CD4-positive, alpha-beta T cell (primary cell): ENCODE measurements at regions of chrX and their contacts with region 1.

Region 1: DNA sequence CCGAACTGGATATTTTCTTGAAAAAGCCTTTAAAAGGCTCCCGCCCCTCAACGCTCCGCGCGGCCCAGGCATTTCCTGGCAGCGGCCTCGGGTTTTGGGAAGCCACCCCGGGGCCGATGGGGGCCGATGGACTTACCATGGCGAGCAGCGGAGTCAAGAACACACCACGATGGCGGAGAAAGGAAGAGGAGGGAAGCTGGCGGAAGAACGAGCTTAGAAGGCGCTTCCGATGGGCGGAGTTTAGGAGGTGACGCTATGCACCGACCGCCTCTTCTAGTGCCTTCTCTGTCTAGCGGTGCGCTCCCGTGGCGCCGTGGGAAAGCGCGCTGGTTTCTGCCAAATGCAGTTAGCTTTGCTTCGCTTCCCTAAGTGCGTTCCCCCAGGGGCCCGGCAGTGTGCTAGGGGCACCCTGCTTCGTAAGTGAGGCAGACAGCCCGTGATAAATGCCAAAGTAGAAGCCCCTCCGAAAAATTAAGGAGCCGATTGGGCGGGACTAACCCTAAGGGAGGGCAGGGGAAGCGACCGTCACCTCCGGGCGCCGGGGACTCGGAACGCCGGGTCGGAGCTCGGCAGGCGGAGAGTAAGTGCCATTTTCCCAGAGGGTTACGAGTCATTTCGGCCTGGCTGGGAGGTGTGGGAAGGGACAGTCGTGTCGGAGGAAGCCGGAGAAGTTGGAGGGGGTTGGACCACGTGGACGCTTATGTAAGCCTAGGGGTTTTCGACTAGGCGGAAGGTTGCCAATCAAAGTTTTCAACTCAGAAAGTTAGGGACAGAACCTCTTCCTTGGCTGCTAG is at the start of gene RPL39:
- DNase-seq: peak; percentile 52 to 93 (median 74)
- ATAC-seq: peak; percentile 93
- H3K4me3 ChIP-seq: peak within 1 kb of the TSS; percentile 98
- H3K4me3 Mint-ChIP-seq: peak within 1 kb of the TSS; percentile 99
- H3K27ac ChIP-seq: peak within 1 kb of the TSS; percentile 91 to 97
- H3K27ac Mint-ChIP-seq: peak within 1 kb of the TSS; percentile 98
- H3K4me1 ChIP-seq: peaks cover 35% of the 10 kb centered on the region
- H3K4me1 Mint-ChIP-seq: peaks cover 32% of the 10 kb centered on the region
- H3K27me3 ChIP-seq: no peaks in the 10 kb centered on the region
- H3K27me3 Mint-ChIP-seq: no peaks in the 10 kb centered on the region
- CTCF ChIP-seq: no peak
- total RNA-seq, gene RPL39: 3,712 to 3,978 TPM

Region 2: DNA sequence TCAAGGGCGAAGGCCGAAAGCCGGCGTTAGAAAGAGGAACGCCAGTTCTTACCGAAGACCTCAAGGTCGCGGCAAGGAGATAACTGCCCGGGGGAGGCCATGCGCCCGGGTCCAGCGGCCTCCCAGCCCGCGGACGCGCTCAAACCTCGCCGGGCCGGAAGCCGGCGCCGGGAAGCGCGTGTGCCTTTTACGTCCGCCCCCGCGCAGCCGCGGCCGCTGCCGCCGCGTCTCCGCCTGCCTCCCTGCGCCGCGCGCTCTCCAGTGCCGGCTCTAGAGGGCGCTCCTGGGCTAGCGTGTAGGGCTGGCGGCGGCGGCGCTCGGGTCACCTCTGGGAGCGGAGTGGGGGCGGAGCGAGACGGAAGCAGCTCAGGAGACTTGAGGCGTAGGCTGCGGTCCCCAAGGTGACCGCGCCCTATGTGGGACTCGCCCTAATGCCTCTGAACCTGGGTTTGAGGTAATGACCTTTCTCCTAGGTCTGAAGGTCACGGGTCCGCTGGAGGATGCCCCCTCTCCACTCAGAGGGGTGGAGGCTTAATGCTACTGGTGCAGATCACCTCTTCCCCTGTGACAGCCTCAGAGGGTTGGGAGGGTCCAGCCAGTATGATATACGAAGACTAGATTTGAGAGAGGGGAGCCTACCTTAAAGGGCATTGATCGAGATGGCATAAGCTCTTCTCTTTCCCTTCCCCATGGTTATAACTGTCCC is 322.6 kb before region 1 on chrX:
- CTCF ChIA-PET with region 1: no interaction called
- POLR2A ChIA-PET with region 1: interaction called, 16 read pairs
- intact Hi-C with region 1: loop called in 1 of 2 experiments (anchors 5 kb)
- DNase-seq: peak; percentile 76 to 93 (median 84)
- ATAC-seq: peak; percentile 77
- H3K4me3 ChIP-seq: peak overlapping the region; percentile 92
- H3K4me3 Mint-ChIP-seq: peak overlapping the region; percentile 93
- H3K27ac ChIP-seq: peak overlapping the region; percentile 84 to 97
- H3K27ac Mint-ChIP-seq: peak overlapping the region; percentile 89
- H3K4me1 ChIP-seq: peaks cover 18% of the 10 kb centered on the region
- H3K4me1 Mint-ChIP-seq: peaks cover 10% of the 10 kb centered on the region
- H3K27me3 ChIP-seq: no peaks in the 10 kb centered on the region
- H3K27me3 Mint-ChIP-seq: no peaks in the 10 kb centered on the region
- CTCF ChIP-seq: peak; percentile 70

Region 3: GRCh38 chrX:119606280-119607015 is 185.2 kb before region 1 on chrX and contains the start of gene NKRF:
- CTCF ChIA-PET with region 1: no interaction called
- POLR2A ChIA-PET with region 1: interaction called, 16 read pairs
- intact Hi-C with region 1: loop called in 1 of 2 experiments (anchors 5 kb)
- DNase-seq: peak; percentile 81 to 96 (median 86)
- ATAC-seq: peak; percentile 76
- H3K4me3 ChIP-seq: peak within 1 kb of the TSS; percentile 90
- H3K4me3 Mint-ChIP-seq: peak within 1 kb of the TSS; percentile 99
- H3K27ac ChIP-seq: peak within 1 kb of the TSS; percentile 82 to 90
- H3K27ac Mint-ChIP-seq: peak within 1 kb of the TSS; percentile 96
- H3K4me1 ChIP-seq: peaks cover 17% of the 10 kb centered on the region
- H3K4me1 Mint-ChIP-seq: peaks cover 48% of the 10 kb centered on the region
- H3K27me3 ChIP-seq: no peaks in the 10 kb centered on the region
- H3K27me3 Mint-ChIP-seq: no peaks in the 10 kb centered on the region
- CTCF ChIP-seq: no peak
- total RNA-seq, gene NKRF: 16.4 to 16.5 TPM

Region 4: GRCh38 chrX:119753571-119754257 is 37.9 kb before region 1 on chrX:
- CTCF ChIA-PET with region 1: interaction called, 3 read pairs
- POLR2A ChIA-PET with region 1: interaction called, 90 read pairs
- intact Hi-C with region 1: no loop called
- DNase-seq: peak in 11 of 14 experiments; percentile 14 to 89 (median 48)
- ATAC-seq: peak; percentile 65
- H3K4me3 ChIP-seq: no peak overlapping the region
- H3K4me3 Mint-ChIP-seq: peak overlapping the region; percentile 91
- H3K27ac ChIP-seq: peak overlapping the region in 1 of 2 donors; percentile 48
- H3K27ac Mint-ChIP-seq: peak overlapping the region; percentile 97
- H3K4me1 ChIP-seq: peaks cover 52% of the 10 kb centered on the region
- H3K4me1 Mint-ChIP-seq: peaks cover 44% of the 10 kb centered on the region
- H3K27me3 ChIP-seq: no peaks in the 10 kb centered on the region
- H3K27me3 Mint-ChIP-seq: no peaks in the 10 kb centered on the region
- CTCF ChIP-seq: peak; percentile 40

Region 5: GRCh38 chrX:119852382-119853353 is 61.0 kb after region 1 on chrX and contains the start of gene UPF3B:
- CTCF ChIA-PET with region 1: interaction called, 4 read pairs
- POLR2A ChIA-PET with region 1: interaction called, 49 read pairs
- intact Hi-C with region 1: loop called (anchors 5 kb)
- DNase-seq: peak; percentile 82 to 98 (median 90)
- ATAC-seq: peak; percentile 98
- H3K4me3 ChIP-seq: peak within 1 kb of the TSS; percentile 95
- H3K4me3 Mint-ChIP-seq: peak within 1 kb of the TSS; percentile 99
- H3K27ac ChIP-seq: peak within 1 kb of the TSS; percentile 82 to 93
- H3K27ac Mint-ChIP-seq: peak within 1 kb of the TSS; percentile 94
- H3K4me1 ChIP-seq: peaks cover 10% of the 10 kb centered on the region
- H3K4me1 Mint-ChIP-seq: peaks cover 22% of the 10 kb centered on the region
- H3K27me3 ChIP-seq: no peaks in the 10 kb centered on the region
- H3K27me3 Mint-ChIP-seq: no peaks in the 10 kb centered on the region
- CTCF ChIP-seq: no peak
- total RNA-seq, gene UPF3B: 4.7 to 5.7 TPM

Region 6: DNA sequence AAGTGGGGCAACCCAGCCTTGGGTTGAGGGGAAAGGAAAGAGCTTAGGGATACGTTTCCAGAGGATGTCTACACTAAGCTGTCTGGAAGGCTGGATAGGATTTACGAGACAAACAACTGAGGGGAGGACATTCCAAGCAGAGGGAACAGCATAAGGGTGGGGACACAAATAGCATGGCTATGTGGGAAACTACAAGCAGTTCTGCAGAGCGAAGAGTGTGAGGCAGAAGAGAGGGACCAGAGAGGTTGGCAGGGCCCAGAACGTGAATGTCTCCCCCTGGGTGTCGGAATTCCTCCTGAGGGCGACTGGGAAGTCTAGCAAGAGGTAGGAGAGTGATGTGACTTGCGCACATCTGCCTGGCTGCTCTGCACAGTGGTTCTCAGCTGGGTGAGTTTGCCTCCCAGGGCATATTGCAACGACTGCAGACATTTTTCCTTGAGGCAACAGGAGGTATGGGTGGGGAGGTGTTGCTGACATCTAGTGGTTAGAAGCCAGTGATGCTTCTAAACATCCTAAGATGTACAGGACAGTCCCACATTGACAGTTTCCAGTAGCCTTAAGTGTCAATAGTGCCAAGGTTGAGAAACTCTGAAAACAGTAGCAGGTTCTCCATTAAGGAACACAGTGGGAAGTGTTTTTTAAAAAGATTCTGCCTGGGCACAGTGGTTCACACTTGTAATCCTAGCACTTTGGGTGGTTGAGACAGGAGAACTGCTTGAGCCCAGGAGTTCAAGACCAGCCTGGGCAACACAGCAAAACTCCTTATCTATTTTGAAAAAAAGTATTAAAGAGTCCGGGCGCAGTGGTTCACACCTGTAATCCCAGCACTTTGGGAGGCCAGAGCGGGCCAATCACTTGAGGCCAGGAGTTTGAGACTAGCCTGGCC is 89.2 kb after region 1 on chrX:
- CTCF ChIA-PET with region 1: no interaction called
- POLR2A ChIA-PET with region 1: interaction called, 3 read pairs
- intact Hi-C with region 1: loop called in 1 of 2 experiments (anchors 2 kb)
- DNase-seq: peak in 8 of 14 experiments; percentile 4 to 76 (median 25)
- ATAC-seq: peak; percentile 90
- H3K4me3 ChIP-seq: no peak overlapping the region
- H3K4me3 Mint-ChIP-seq: no peak overlapping the region
- H3K27ac ChIP-seq: no peak overlapping the region
- H3K27ac Mint-ChIP-seq: peak overlapping the region; percentile 69
- H3K4me1 ChIP-seq: no peaks in the 10 kb centered on the region
- H3K4me1 Mint-ChIP-seq: peaks cover 20% of the 10 kb centered on the region
- H3K27me3 ChIP-seq: no peaks in the 10 kb centered on the region
- H3K27me3 Mint-ChIP-seq: no peaks in the 10 kb centered on the region
- CTCF ChIP-seq: peak; percentile 48

Region 7: GRCh38 chrX:119916310-119916709 is 124.7 kb after region 1 on chrX:
- CTCF ChIA-PET with region 1: no interaction called
- POLR2A ChIA-PET with region 1: no interaction called
- intact Hi-C with region 1: no loop called
- DNase-seq: no peak
- ATAC-seq: no peak
- H3K4me3 ChIP-seq: no peak overlapping the region
- H3K4me3 Mint-ChIP-seq: no peak overlapping the region
- H3K27ac ChIP-seq: no peak overlapping the region
- H3K27ac Mint-ChIP-seq: no peak overlapping the region
- H3K4me1 ChIP-seq: no peaks in the 10 kb centered on the region
- H3K4me1 Mint-ChIP-seq: no peaks in the 10 kb centered on the region
- H3K27me3 ChIP-seq: no peaks in the 10 kb centered on the region
- H3K27me3 Mint-ChIP-seq: no peaks in the 10 kb centered on the region
- CTCF ChIP-seq: no peak

Region 8: DNA sequence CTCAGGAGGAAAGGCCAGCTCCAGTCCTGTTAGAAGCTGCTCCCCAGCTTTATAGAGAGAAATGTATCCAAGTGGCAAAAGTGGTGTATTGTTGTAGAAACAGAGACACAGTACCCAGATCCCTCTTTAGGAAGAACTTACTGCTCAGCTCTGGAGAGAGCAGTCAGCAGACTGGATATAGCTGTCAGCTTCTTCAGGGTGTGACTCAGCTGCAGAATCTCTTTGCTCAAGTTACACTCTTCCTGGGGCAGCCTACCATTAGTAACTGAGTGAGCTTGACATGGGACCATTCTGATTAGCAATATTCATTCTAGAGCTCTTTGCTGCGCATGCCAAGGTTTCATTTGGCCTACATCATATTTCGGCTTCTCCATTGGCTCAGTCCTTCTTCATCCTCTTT is 610.7 kb after region 1 on chrX:
- CTCF ChIA-PET with region 1: no interaction called
- POLR2A ChIA-PET with region 1: no interaction called
- intact Hi-C with region 1: no loop called
- DNase-seq: no peak
- ATAC-seq: no peak
- H3K4me3 ChIP-seq: no peak overlapping the region
- H3K4me3 Mint-ChIP-seq: no peak overlapping the region
- H3K27ac ChIP-seq: no peak overlapping the region
- H3K27ac Mint-ChIP-seq: no peak overlapping the region
- H3K4me1 ChIP-seq: no peaks in the 10 kb centered on the region
- H3K4me1 Mint-ChIP-seq: no peaks in the 10 kb centered on the region
- H3K27me3 ChIP-seq: no peaks in the 10 kb centered on the region
- H3K27me3 Mint-ChIP-seq: no peaks in the 10 kb centered on the region
- CTCF ChIP-seq: no peak